ENCODE measurements at regions of chr11 and their contacts with region 1.

Region 1: GRCh38 chr11:26753723-26754504 is 32.1 kb upstream of the SLC5A12 start:
- DNase-seq: peak; percentile 45
- H3K4me3 ChIP-seq: no peak overlapping the region
- H3K27ac ChIP-seq: no peak overlapping the region
- H3K27me3 ChIP-seq: no peaks in the 10 kb centered on the region
- CTCF ChIP-seq: peak; percentile 85

Region 2: DNA sequence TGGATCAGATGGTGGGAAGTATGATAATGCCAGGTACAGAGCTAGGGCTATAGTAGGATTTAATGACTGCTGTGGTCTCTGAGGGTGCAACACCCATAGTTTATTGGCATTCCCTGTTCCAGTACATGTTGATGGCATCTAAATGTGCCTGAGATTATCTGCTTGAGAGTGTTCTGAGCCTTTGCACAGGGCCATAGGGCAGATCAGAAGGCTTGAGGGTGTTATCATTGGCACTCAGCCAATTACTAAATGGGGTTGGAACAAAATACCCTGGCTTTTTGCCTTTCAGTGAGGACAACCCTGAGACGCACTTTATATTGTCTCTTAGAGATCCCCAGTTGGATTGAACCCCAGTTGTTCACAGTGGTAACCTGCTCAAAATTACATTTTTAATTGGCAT is 38.8 kb before region 1 on chr11:
- CTCF ChIA-PET with region 1: no interaction called
- POLR2A ChIA-PET with region 1: no interaction called
- DNase-seq: no peak
- H3K4me3 ChIP-seq: no peak overlapping the region
- H3K27ac ChIP-seq: no peak overlapping the region
- H3K27me3 ChIP-seq: no peaks in the 10 kb centered on the region
- CTCF ChIP-seq: no peak

Region 3: DNA sequence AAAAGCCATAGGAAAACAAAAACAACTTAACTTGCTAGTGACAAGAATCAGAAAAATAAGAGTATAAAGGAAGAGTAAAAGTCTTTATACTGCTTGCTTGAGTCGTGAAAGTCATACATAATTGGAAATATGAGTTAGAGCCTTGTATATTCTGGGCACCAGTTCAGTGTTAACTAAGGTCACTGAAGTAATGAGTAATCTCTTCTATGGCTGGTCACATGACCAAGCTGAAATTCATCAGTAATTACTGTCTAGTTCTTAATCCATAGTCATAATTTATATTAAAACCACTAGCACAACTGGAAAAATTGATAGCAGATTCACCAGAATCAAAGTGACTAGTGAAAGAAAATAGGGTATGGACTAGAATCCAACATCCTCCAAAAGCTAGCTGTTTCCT is 52.3 kb after region 1 on chr11:
- CTCF ChIA-PET with region 1: no interaction called
- POLR2A ChIA-PET with region 1: no interaction called
- DNase-seq: no peak
- H3K4me3 ChIP-seq: no peak overlapping the region
- H3K27ac ChIP-seq: no peak overlapping the region
- H3K27me3 ChIP-seq: no peaks in the 10 kb centered on the region
- CTCF ChIP-seq: no peak

Region 4: GRCh38 chr11:27124514-27125264 is 370.8 kb after region 1 on chr11:
- CTCF ChIA-PET with region 1: interaction called, 10 read pairs
- POLR2A ChIA-PET with region 1: no interaction called
- DNase-seq: no peak
- H3K4me3 ChIP-seq: no peak overlapping the region
- H3K27ac ChIP-seq: no peak overlapping the region
- H3K27me3 ChIP-seq: no peaks in the 10 kb centered on the region
- CTCF ChIP-seq: peak; percentile 36

Measured in AG04450 (cell line).